ENCODE measurements at regions of chr5 and their contacts with region 1.

Region 1: DNA sequence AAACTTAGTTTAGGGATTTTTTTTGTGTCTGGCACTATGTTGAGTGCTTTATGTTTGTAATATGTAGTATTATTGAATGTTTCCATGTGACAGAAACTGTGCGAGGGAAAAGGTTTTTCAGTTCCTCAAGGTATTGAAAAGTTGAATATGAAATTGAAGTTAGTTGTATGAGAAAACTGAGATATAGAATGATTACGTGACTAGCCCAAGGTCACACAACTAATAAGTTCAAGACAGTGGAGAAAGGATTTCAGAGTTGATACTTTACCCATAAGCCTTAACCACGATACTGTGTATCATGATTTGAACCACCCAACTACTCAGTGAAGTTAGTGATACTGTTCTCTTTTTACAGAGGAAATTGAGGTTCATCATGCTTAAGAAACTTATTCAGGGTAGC is 5.7 kb downstream of the NIPBL start:
- DNase-seq: peak; percentile 19
- ATAC-seq: no peak
- H3K4me3 ChIP-seq: no peak overlapping the region
- H3K4me3 Mint-ChIP-seq: peak overlapping the region; percentile 31
- H3K27ac ChIP-seq: peak overlapping the region in 1 of 2 donors; percentile 20
- H3K27ac Mint-ChIP-seq: no peak overlapping the region
- H3K4me1 ChIP-seq: peaks cover 26 to 57% of the 10 kb centered on the region in 2 donors
- H3K4me1 Mint-ChIP-seq: peaks cover 68% of the 10 kb centered on the region
- H3K27me3 ChIP-seq: no peaks in the 10 kb centered on the region
- H3K27me3 Mint-ChIP-seq: no peaks in the 10 kb centered on the region
- CTCF ChIP-seq: no peak

Region 2: GRCh38 chr5:36919650-36920049 is 37.4 kb after region 1 on chr5:
- CTCF ChIA-PET with region 1: no interaction called
- POLR2A ChIA-PET with region 1: no interaction called
- intact Hi-C with region 1: loop called (anchors 5 kb)
- DNase-seq: no peak
- ATAC-seq: no peak
- H3K4me3 ChIP-seq: no peak overlapping the region
- H3K4me3 Mint-ChIP-seq: no peak overlapping the region
- H3K27ac ChIP-seq: no peak overlapping the region
- H3K27ac Mint-ChIP-seq: no peak overlapping the region
- H3K4me1 ChIP-seq: peaks cover 3 to 20% of the 10 kb centered on the region in 2 donors
- H3K4me1 Mint-ChIP-seq: peaks cover 54% of the 10 kb centered on the region
- H3K27me3 ChIP-seq: no peaks in the 10 kb centered on the region
- H3K27me3 Mint-ChIP-seq: no peaks in the 10 kb centered on the region
- CTCF ChIP-seq: no peak